ENCODE measurements at regions of chr7 and their contacts with region 1.

Region 1: GRCh38 chr7:154794110-154794780 is 208.7 kb downstream of the PAXIP1 start:
- DNase-seq: no peak
- H3K4me3 ChIP-seq: no peak overlapping the region
- H3K27ac ChIP-seq: peak overlapping the region in 9 of 59 donors; percentile 9 to 86 (median 52)
- H3K27me3 ChIP-seq: no peaks in the 10 kb centered on the region
- CTCF ChIP-seq: peak in 26 of 56 donors; percentile 8 to 48 (median 26)

Region 2: DNA sequence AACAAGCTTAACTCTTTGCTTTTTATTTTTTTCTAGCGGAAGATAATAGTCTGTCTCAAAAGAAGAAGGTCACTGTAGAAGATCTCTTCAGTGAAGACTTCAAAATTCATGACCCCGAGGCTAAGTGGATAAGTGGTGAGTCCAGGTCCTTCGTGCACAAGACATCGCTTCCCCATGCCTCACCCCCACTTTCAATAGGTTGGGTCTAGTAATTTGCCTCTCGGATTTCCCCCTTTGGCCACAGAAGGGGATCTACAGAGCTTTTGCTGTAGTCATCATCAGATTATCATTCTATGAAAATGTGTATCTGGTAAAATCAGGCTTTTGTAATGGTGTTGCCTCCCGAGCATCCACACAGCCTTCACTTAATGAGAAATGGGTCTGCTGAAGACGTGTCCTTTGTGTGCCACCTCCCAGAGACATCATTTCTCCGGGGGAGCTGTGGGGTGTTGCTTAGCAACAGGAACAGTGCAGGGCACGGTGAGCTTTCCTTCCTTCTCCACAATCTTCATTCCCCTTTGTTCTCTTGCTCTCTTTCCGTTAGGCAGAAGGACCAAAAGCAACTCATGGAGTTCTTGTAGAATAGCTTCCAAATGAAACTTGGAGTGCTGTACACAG is 319.2 kb before region 1 on chr7:
- intact Hi-C with region 1: no loop called
- DNase-seq: no peak
- H3K4me3 ChIP-seq: peak overlapping the region in 2 of 59 donors; percentile 24 to 32
- H3K27ac ChIP-seq: peak overlapping the region in 50 of 59 donors; percentile 39 to 94 (median 80)
- H3K27me3 ChIP-seq: no peaks in the 10 kb centered on the region
- CTCF ChIP-seq: no peak

Region 3: DNA sequence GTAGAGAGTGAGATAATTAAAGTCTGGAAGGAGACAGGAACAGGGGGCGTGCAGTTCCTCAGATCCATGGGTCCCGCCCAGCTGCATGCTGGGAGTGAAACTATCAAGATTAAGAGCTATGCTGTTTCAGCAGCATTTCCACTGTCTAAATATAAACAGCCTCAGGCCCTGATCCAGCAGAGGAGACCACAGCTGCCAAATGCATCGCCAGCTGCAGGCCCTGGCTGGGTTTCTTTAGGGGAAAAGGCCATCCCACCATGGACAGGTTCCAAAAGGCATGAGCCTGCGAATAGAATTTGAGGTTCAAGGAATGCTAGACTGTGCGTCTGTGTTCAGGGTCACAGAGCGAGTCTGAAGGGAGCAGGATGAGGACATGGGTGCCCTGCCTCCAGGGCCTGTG is 202.7 kb before region 1 on chr7:
- intact Hi-C with region 1: loop called in 1 of 2 experiments (anchors 10 kb)
- DNase-seq: peak; percentile 26 to 82 (median 76)
- H3K4me3 ChIP-seq: peak overlapping the region in 4 of 59 donors; percentile 7 to 20 (median 13)
- H3K27ac ChIP-seq: peak overlapping the region; percentile 5 to 98 (median 89)
- H3K27me3 ChIP-seq: no peaks in the 10 kb centered on the region
- CTCF ChIP-seq: peak in 4 of 56 donors; percentile 5 to 16 (median 13)

Region 4: DNA sequence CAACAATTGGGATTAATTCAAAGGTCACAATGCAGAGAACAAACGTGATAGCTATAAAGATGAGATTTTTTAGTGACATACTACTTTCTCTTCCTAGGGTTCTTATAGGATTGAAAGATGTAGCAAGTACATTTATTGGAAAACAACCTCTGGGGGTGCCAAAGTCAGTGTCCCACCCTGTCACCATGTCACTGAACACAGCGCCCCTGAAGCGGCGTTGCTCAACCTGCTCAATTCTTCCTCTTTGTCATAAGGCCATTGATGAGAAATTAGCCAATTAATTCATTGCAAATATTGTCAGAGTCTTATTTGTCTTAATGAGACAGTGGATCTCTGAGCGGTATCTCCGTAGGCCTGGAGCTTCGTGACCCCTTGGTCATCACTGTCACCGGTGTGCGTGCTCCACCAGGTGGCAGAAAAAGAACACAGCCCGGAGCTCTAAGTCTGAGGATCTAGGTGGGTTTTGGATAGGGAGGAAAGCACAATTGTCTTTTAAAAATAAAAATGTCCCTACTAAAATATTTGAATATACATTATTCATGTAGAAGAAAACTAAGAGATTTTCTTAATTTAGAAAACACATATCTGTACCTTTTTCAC is 153.9 kb before region 1 on chr7:
- intact Hi-C with region 1: loop called (anchors 2 to 5 kb)
- DNase-seq: peak; percentile 43 to 69 (median 50)
- H3K4me3 ChIP-seq: no peak overlapping the region
- H3K27ac ChIP-seq: peak overlapping the region in 1 of 59 donors; percentile 45
- H3K27me3 ChIP-seq: no peaks in the 10 kb centered on the region
- CTCF ChIP-seq: peak; percentile 14 to 84 (median 64)

Region 5: GRCh38 chr7:154698726-154699291 is 95.4 kb before region 1 on chr7:
- intact Hi-C with region 1: loop called in 1 of 2 experiments (anchors 5 kb)
- DNase-seq: no peak
- H3K4me3 ChIP-seq: no peak overlapping the region
- H3K27ac ChIP-seq: no peak overlapping the region
- H3K27me3 ChIP-seq: no peaks in the 10 kb centered on the region
- CTCF ChIP-seq: peak in 51 of 56 donors; percentile 28 to 76 (median 49)